ENCODE measurements at regions of chr15 and their contacts with region 1.

Region 1: GRCh38 chr15:32994810-32995424 is 199.6 kb downstream of the FMN1 start:
- DNase-seq: no peak
- ATAC-seq: no peak
- H3K4me3 Mint-ChIP-seq: no peak overlapping the region
- H3K27ac Mint-ChIP-seq: no peak overlapping the region
- H3K4me1 Mint-ChIP-seq: peaks cover 9% of the 10 kb centered on the region
- H3K27me3 Mint-ChIP-seq: no peaks in the 10 kb centered on the region
- CTCF ChIP-seq: peak; percentile 51; the same call in 1 of the 2 replicates

Region 2: DNA sequence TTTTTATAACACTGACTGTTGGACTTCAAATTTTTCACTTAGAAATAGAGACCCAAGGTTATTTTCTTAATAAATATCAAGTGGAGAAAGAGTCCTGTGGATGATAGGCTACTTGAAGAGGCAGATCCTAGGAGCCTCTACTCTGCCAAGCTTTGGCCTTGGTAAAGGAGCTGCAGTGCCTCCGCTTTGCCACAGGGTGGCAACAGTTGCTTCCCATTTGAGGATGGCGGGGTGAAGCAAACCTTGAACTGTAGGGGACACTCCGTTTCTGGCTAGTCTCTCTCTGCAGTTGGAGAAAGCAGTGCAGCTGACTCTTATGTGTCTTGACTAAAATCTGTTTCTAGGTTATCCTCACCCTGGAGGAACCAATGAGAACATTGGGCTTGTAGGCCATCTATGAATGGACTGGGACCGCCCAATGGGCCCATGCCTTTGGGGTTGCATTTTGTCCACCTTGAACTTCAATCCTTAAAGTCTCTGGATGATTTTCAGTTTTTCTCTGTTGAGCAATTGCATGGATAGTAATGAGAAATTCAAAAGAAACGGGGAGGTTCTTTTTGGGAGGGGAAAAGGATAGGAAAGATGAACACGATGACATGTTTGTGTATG is 343.6 kb before region 1 on chr15:
- CTCF ChIA-PET with region 1: interaction called, 35 read pairs
- POLR2A ChIA-PET with region 1: no interaction called
- DNase-seq: peak; percentile 70
- ATAC-seq: peak; percentile 89
- H3K4me3 Mint-ChIP-seq: no peak overlapping the region
- H3K27ac Mint-ChIP-seq: no peak overlapping the region
- H3K4me1 Mint-ChIP-seq: peaks cover 29% of the 10 kb centered on the region
- H3K27me3 Mint-ChIP-seq: no peaks in the 10 kb centered on the region
- CTCF ChIP-seq: peak; percentile 87

Region 3: DNA sequence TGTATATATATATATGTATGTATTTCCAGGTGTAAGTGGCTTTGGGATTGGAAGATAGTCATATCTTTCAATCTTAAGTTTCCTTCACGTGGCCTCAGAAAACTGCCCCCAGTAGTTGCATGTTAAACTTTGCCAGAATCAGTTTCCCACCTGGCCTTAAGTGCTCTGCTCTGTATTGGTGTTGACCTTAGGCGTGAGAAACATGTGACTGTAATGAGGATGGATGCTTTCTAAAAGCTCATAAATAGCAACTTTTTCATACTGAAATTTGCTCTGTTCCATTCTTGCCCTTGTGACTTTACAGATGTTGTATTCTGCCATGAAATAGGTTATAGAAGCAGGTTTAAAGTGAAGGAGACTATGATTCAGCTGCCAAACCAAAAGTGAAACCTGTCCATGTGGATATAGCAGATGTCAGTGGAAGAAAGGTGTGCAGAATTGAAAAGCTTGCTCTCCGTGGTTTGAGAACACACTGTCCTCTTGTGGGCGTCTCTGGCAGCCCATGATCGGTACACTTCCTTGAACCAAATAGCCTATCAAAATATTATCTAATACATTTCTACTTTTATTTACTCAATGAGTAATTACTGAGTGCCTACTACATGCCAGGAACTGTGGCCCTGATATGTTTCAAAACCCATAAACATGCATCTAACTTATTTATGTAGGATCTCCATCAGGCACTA is 337.6 kb before region 1 on chr15:
- CTCF ChIA-PET with region 1: interaction called, 21 read pairs
- POLR2A ChIA-PET with region 1: no interaction called
- DNase-seq: no peak
- ATAC-seq: no peak
- H3K4me3 Mint-ChIP-seq: no peak overlapping the region
- H3K27ac Mint-ChIP-seq: no peak overlapping the region
- H3K4me1 Mint-ChIP-seq: peaks cover 13% of the 10 kb centered on the region
- H3K27me3 Mint-ChIP-seq: no peaks in the 10 kb centered on the region
- CTCF ChIP-seq: no peak

Region 4: DNA sequence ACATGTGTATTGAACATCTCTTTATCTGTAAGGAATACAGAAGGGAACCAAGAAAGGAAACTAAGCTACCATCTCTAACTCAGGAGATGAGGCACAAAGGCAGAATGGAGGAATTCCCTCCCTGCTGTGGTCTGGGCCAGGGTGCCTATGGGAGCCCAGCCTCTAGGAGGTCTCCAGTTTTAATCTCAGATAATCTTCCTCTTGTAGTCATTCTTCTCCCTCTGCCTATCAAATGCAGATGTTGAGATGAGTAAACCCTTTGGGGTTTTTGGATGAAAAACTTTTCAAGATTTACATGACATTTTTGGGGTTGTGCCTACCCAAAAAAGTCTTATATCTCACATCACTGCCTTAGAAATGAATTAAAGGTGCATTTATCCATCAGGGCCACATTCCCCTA is 330.1 kb before region 1 on chr15:
- CTCF ChIA-PET with region 1: interaction called, 21 read pairs
- POLR2A ChIA-PET with region 1: no interaction called
- DNase-seq: no peak
- ATAC-seq: no peak
- H3K4me3 Mint-ChIP-seq: no peak overlapping the region
- H3K27ac Mint-ChIP-seq: no peak overlapping the region
- H3K4me1 Mint-ChIP-seq: peaks cover 17% of the 10 kb centered on the region
- H3K27me3 Mint-ChIP-seq: no peaks in the 10 kb centered on the region
- CTCF ChIP-seq: no peak

Region 5: DNA sequence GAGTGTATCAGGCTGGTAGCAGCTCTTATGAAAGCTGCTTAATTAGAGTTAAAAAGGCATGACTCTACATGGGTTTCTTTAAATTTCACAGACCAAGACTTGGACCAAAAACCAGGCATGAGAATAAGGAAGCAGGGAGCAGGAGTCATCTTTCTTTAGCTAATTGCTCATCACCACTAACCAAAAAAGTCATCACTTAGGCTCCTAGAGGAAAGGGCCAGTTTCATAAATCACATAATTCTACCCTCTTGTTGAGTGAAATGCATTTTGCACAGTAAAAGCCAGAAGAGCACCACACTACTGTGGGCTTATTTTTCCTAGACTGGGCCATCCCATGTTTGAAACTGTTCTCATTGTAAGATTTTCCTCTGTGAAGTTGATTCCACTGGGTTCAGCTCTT is 101.5 kb before region 1 on chr15:
- CTCF ChIA-PET with region 1: no interaction called
- POLR2A ChIA-PET with region 1: no interaction called
- DNase-seq: no peak
- ATAC-seq: no peak
- H3K4me3 Mint-ChIP-seq: no peak overlapping the region
- H3K27ac Mint-ChIP-seq: no peak overlapping the region
- H3K4me1 Mint-ChIP-seq: peaks cover 12% of the 10 kb centered on the region
- H3K27me3 Mint-ChIP-seq: peaks cover 13% of the 10 kb centered on the region
- CTCF ChIP-seq: no peak

Region 6: GRCh38 chr15:32979710-32980109 is 15.2 kb before region 1 on chr15:
- CTCF ChIA-PET with region 1: interaction called, 12 read pairs
- POLR2A ChIA-PET with region 1: no interaction called
- DNase-seq: no peak
- ATAC-seq: no peak
- H3K4me3 Mint-ChIP-seq: no peak overlapping the region
- H3K27ac Mint-ChIP-seq: no peak overlapping the region
- H3K4me1 Mint-ChIP-seq: no peaks in the 10 kb centered on the region
- H3K27me3 Mint-ChIP-seq: no peaks in the 10 kb centered on the region
- CTCF ChIP-seq: no peak

Region 7: GRCh38 chr15:33055962-33056361 is 61.0 kb after region 1 on chr15:
- CTCF ChIA-PET with region 1: no interaction called
- POLR2A ChIA-PET with region 1: no interaction called
- DNase-seq: no peak
- ATAC-seq: no peak
- H3K4me3 Mint-ChIP-seq: no peak overlapping the region
- H3K27ac Mint-ChIP-seq: no peak overlapping the region
- H3K4me1 Mint-ChIP-seq: 0 out of 2 replicates have a peak, but pooled peaks cover 5% of the 10 kb centered on the region
- H3K27me3 Mint-ChIP-seq: peaks cover 3% of the 10 kb centered on the region; the same call in 1 of the 2 replicates
- CTCF ChIP-seq: no peak

Region 8: DNA sequence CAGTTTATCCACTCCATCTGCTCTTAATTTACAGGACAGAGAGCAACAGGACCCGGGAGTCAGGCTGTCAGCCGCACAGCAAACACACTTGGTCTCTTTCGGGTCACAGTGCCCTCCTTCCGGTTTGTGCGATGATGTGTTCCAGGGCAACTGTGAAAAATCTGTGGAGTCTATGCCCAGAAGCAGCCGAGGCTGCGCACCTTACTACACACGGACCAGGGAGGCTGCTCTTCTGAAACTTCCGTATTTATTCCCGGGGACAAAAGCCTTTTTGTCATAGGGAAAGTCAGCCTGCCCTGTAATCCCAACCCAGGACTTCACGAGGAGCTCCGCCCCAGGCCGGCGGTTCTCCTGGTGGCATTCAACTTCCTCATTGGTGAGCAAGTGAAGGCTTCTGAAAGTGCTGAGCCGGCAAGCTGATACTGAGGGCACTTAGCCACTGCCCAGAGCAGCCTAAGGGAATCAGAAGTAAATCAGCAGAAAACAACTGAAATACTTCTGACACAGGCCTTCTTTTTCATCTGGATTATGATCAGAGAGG is 73.1 kb after region 1 on chr15:
- CTCF ChIA-PET with region 1: no interaction called
- POLR2A ChIA-PET with region 1: no interaction called
- DNase-seq: peak; percentile 42
- ATAC-seq: peak; percentile 76
- H3K4me3 Mint-ChIP-seq: peak overlapping the region; percentile 45
- H3K27ac Mint-ChIP-seq: peak overlapping the region; percentile 94
- H3K4me1 Mint-ChIP-seq: peaks cover 56% of the 10 kb centered on the region
- H3K27me3 Mint-ChIP-seq: no peaks in the 10 kb centered on the region
- CTCF ChIP-seq: no peak

Measured in WTC11 (cell line).